Ascending aorta (tissue), 2 donors: ENCODE measurements at regions of chr4 and their contacts with region 1.

Region 1: GRCh38 chr4:153497988-153498967 is 32.1 kb downstream of the TMEM131L start:
- DNase-seq: no peak
- H3K4me3 ChIP-seq: peak overlapping the region in 1 of 2 donors; percentile 45
- H3K27ac ChIP-seq: peak overlapping the region; percentile 69 to 81
- H3K4me1 ChIP-seq: peaks cover 6 to 42% of the 10 kb centered on the region in 2 donors
- H3K27me3 ChIP-seq: no peaks in the 10 kb centered on the region
- CTCF ChIP-seq: no peak

Region 2: DNA sequence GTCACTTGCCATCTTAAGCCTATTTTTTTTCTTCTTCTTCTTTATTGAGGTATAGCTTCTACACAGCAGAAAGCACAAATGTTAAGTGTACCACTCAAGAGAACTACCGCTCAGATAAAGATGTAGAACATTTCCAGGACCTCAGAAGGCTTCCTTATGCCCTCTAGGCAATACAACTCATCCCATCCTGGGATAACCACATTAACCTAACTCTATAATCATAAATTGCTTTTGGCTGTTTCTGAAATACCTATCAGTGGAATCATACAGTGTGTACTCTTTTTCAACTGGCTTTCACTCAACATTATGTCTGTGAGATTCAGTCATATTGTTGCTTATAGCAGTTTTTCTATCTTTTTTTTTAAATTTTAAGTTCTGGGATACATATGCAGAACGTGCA is 666.9 kb before region 1 on chr4:
- intact Hi-C with region 1: no loop called
- DNase-seq: no peak
- H3K4me3 ChIP-seq: no peak overlapping the region
- H3K27ac ChIP-seq: no peak overlapping the region
- H3K4me1 ChIP-seq: no peaks in the 10 kb centered on the region
- H3K27me3 ChIP-seq: no peaks in the 10 kb centered on the region
- CTCF ChIP-seq: no peak

Region 3: DNA sequence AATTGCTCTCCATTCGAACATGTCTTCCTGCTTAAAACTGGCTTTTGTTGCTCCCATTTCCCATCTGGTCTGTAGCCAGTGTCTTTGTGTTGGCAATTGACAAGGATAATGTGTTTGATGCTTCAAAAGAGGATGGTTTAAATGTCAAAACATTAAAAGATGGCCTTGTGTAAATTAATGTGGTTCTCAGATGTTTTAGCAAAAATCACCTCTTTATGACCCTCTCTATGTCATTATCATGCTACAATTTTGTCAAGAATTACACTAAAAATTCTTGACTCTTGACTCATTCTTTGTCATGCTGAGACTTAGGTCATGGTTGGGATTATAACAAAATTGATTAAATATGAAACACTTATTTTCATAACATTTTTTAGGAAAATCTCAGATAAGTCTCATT is 15.3 kb after region 1 on chr4:
- intact Hi-C with region 1: loop called (anchors 2 kb)
- DNase-seq: no peak
- H3K4me3 ChIP-seq: no peak overlapping the region
- H3K27ac ChIP-seq: peak overlapping the region; percentile 72 to 75
- H3K4me1 ChIP-seq: peaks cover 3 to 24% of the 10 kb centered on the region in 2 donors
- H3K27me3 ChIP-seq: no peaks in the 10 kb centered on the region
- CTCF ChIP-seq: no peak

Region 4: DNA sequence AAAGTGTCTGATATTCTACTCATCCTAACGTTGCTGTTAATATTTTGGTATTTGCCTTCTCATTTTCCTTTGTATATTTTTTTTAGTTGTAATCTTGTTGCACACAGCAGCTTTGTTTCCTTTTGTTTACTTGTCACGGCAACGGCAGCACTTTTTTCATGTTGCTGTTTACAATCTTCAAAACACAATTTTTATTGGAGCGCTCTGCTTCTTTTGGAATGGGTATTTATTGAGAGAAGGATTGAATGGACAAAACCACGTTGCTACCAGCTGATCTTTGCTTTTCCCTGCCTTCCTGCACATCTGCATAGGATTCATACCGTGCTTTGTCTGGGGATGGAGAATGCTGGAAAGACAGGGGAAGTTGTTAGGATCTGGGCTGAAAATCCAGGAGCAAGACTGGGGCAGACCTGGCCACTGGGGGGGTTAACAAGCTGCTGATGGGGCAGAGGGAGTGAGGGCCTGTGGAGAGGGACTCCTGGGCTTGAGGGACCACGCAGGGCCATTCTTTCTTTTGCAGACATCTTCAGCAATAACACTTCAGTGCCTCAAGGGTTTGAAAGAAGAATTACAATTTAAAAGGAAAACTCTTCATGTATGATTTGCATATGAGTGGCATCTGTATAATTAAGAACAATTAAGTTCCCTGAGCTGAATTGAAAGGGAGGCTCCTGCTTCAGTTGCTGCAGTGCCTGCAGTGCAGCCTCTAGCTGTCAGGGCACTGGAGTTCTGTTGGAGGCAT is 37.7 kb after region 1 on chr4:
- intact Hi-C with region 1: loop called (anchors 2 kb)
- DNase-seq: no peak
- H3K4me3 ChIP-seq: no peak overlapping the region
- H3K27ac ChIP-seq: no peak overlapping the region
- H3K4me1 ChIP-seq: peaks cover 5 to 20% of the 10 kb centered on the region in 2 donors
- H3K27me3 ChIP-seq: no peaks in the 10 kb centered on the region
- CTCF ChIP-seq: no peak